ENCODE measurements at regions of chr13 and their contacts with region 1.

Region 1: GRCh38 chr13:97018029-97018831 is 24.0 kb upstream of the OXGR1 start:
- DNase-seq: no peak
- ATAC-seq: peak; percentile 87
- H3K4me3 ChIP-seq: no peak overlapping the region
- H3K27ac ChIP-seq: no peak overlapping the region
- H3K4me1 ChIP-seq: no peaks in the 10 kb centered on the region
- H3K27me3 ChIP-seq: peaks cover 0 to 6% of the 10 kb centered on the region in 2 experiments; a peak in 2 of 4 replicates
- CTCF ChIP-seq: peak; percentile 78 to 88 (median 80)
- EP300 ChIP-seq: no peak
- POLR2A ChIP-seq: no peak
- RAD21 ChIP-seq: peak; percentile 66

Region 2: DNA sequence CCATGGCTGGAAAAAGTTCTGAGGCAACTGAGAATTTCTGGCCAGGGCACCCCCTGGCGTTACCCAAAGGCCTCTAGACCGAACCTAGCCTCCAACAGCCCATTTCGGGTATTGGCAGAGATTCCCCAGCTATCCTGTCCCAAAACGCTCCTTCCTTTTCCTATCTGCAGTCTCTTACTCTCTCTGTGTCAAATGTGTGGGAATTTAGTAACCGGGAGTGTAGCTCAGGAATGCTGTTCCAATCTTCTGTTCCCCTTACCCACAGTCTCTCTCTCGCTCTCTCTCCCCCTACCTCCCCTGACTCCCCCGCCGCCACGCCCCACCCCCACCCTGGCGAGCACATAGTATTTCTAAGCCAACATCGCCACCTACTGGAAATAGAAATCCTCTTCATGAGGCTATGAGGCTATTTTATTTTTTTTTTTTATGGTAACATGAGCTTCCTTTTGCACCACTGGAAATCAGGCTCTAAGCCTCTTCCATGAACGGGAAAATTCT is 50.9 kb before region 1 on chr13:
- CTCF ChIA-PET with region 1: no interaction called
- POLR2A ChIA-PET with region 1: no interaction called
- RAD21 ChIA-PET with region 1: no interaction called
- SMC1A ChIA-PET with region 1: no interaction called
- in situ Hi-C with region 1: no loop called
- intact Hi-C with region 1: no loop called
- DNase-seq: no peak
- ATAC-seq: no peak
- H3K4me3 ChIP-seq: no peak overlapping the region
- H3K27ac ChIP-seq: no peak overlapping the region
- H3K4me1 ChIP-seq: no peaks in the 10 kb centered on the region
- H3K27me3 ChIP-seq: no peaks in the 10 kb centered on the region
- CTCF ChIP-seq: no peak; a peak in 1 of 6 replicates
- EP300 ChIP-seq: no peak
- POLR2A ChIP-seq: no peak
- RAD21 ChIP-seq: no peak

Region 3: DNA sequence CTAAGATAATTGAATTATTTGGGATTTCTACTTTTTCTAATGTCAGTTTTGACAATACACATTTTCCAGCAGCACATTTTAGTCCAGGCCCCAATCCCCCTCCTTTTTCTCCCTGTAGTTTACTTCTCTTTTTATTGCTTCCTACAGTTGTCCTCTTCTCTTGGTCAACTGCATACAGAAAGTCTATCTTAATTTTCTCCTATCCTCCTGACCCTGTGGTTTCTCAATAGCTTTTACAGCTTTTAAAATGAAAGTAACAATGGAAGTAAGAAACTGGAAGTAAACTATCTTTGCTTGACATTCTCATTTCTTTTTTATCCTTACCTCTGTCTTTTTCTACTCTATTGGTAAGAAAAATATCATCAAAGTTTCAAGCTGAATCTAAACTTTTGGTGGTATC is 82.6 kb after region 1 on chr13:
- CTCF ChIA-PET with region 1: no interaction called
- POLR2A ChIA-PET with region 1: no interaction called
- RAD21 ChIA-PET with region 1: no interaction called
- SMC1A ChIA-PET with region 1: no interaction called
- in situ Hi-C with region 1: no loop called
- intact Hi-C with region 1: no loop called
- DNase-seq: no peak
- ATAC-seq: no peak
- H3K4me3 ChIP-seq: no peak overlapping the region
- H3K27ac ChIP-seq: no peak overlapping the region
- H3K4me1 ChIP-seq: no peaks in the 10 kb centered on the region
- H3K27me3 ChIP-seq: no peaks in the 10 kb centered on the region
- CTCF ChIP-seq: no peak
- EP300 ChIP-seq: no peak
- POLR2A ChIP-seq: no peak
- RAD21 ChIP-seq: no peak

Region 4: GRCh38 chr13:97194479-97194878 is 176.2 kb after region 1 on chr13:
- CTCF ChIA-PET with region 1: no interaction called
- POLR2A ChIA-PET with region 1: no interaction called
- RAD21 ChIA-PET with region 1: no interaction called
- SMC1A ChIA-PET with region 1: no interaction called
- in situ Hi-C with region 1: no loop called
- intact Hi-C with region 1: no loop called
- DNase-seq: no peak
- ATAC-seq: no peak
- H3K4me3 ChIP-seq: no peak overlapping the region
- H3K27ac ChIP-seq: no peak overlapping the region
- H3K4me1 ChIP-seq: no peaks in the 10 kb centered on the region
- H3K27me3 ChIP-seq: no peaks in the 10 kb centered on the region; a peak in 1 of 4 replicates
- CTCF ChIP-seq: no peak
- EP300 ChIP-seq: no peak
- POLR2A ChIP-seq: no peak
- RAD21 ChIP-seq: no peak

Region 5: DNA sequence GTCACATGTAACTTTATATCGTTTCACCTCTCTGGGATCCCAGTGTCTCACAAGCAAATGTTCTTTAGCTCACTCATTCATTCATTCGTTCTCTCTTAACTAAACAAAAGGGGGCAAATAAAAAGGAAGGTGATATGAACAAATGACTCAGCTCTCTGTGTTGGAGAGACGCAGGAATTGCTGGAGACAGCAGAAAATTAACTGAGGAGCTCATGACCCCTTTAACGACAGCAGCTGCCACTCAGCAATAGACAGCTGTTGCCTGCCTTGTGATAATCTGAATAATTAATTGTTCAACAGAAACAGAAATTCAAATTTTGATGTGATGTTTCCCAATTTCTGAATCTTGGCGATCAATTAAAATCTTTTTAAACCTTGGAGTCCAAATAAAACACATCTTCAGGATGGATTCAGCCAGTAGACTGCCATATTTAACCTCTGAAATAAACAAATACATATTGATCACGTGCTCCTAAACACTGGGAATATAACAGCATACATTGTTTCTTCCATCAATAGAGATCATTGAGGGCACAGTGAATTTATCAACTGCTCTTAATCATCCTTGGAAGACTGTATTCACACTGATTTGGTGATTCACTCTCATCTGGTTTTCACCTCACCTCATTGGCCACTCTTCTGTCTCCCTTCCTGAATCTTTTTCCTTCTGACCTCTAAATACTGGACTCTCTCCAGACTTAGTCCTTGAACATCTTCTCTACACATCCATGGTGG is 267.2 kb after region 1 on chr13:
- CTCF ChIA-PET with region 1: no interaction called
- POLR2A ChIA-PET with region 1: no interaction called
- RAD21 ChIA-PET with region 1: no interaction called
- SMC1A ChIA-PET with region 1: no interaction called
- in situ Hi-C with region 1: no loop called
- intact Hi-C with region 1: no loop called
- DNase-seq: no peak
- ATAC-seq: no peak
- H3K4me3 ChIP-seq: no peak overlapping the region
- H3K27ac ChIP-seq: no peak overlapping the region
- H3K4me1 ChIP-seq: peaks cover 3% of the 10 kb centered on the region
- H3K27me3 ChIP-seq: no peaks in the 10 kb centered on the region
- CTCF ChIP-seq: no peak
- EP300 ChIP-seq: no peak
- POLR2A ChIP-seq: no peak
- RAD21 ChIP-seq: no peak

Region 6: DNA sequence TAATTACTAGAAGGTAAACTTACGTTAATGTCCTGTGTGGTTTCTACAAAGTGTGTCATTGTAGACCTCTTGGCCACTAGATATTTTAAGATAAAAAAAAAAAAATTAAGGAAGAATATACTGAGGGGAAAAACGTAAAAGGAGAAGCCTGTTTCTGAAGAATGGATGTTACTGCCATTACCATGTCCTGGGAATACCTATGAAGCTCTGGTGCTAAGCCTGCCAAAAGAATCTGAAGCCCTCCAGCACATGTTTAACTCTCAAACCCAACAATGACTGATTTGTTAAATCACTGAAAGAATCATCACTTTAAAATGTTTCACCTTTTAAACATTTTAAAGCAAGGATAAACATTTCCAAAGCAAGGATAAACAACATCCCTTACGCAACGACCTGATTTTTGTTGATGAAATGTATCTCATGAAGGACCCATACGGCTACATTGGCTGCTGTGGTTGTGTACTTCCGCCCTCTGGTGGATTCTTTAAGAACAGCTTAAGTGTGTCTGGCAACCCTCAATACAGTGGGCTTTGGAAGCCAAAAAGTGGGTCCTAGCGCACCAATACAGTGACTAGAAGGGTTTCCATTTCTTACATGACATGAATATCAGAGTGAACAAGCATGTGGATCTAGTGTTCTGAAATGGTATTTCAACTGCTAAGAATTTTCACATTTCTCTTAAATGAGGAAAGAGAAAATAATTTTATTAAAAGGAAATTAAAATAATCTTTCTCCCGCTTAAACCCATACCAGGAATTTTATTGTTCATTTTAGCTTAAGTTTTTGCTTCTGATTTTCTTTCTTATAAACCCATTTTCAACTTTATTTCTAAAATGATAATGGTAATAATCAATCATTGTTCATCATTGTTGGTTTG is 341.2 kb after region 1 on chr13:
- CTCF ChIA-PET with region 1: interaction called, 9 read pairs
- POLR2A ChIA-PET with region 1: no interaction called
- RAD21 ChIA-PET with region 1: interaction called, 3 read pairs
- SMC1A ChIA-PET with region 1: interaction called, 3 read pairs
- in situ Hi-C with region 1: no loop called
- intact Hi-C with region 1: loop called (anchors 2 kb)
- DNase-seq: no peak
- ATAC-seq: peak; percentile 100
- H3K4me3 ChIP-seq: no peak overlapping the region
- H3K27ac ChIP-seq: no peak overlapping the region
- H3K4me1 ChIP-seq: no peaks in the 10 kb centered on the region
- H3K27me3 ChIP-seq: no peaks in the 10 kb centered on the region
- CTCF ChIP-seq: peak; percentile 77 to 84 (median 83)
- EP300 ChIP-seq: no peak
- POLR2A ChIP-seq: no peak
- RAD21 ChIP-seq: peak; percentile 90

Region 7: DNA sequence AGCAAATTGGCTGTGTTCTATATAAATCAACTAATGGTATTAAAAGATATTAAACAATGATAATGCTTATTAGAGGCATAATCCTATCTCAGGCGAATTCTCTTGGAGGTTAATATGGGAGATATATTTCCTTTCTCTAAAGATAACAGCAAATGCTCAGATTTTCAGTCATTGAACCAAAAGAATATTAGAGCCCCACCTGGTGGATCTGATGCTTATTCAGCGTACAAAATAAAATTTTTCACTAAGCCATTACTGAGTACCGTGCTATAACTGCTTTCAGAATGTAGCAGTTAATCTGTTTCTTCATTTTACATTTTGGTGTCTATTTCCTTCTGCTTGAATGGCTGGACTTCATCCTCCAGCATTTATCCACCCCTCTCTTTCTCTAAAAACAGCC is 791.9 kb after region 1 on chr13:
- CTCF ChIA-PET with region 1: no interaction called
- POLR2A ChIA-PET with region 1: no interaction called
- RAD21 ChIA-PET with region 1: no interaction called
- SMC1A ChIA-PET with region 1: no interaction called
- in situ Hi-C with region 1: no loop called
- intact Hi-C with region 1: loop called (anchors 10 kb)
- DNase-seq: no peak
- ATAC-seq: no peak
- H3K4me3 ChIP-seq: no peak overlapping the region
- H3K27ac ChIP-seq: no peak overlapping the region
- H3K4me1 ChIP-seq: no peaks in the 10 kb centered on the region
- H3K27me3 ChIP-seq: no peaks in the 10 kb centered on the region
- CTCF ChIP-seq: peak in 1 of 3 experiments; percentile 17; a peak in 2 of 6 replicates
- EP300 ChIP-seq: no peak
- POLR2A ChIP-seq: no peak
- RAD21 ChIP-seq: peak; percentile 17; the same call in 1 of the 2 replicates